GM13977 (cell line): ENCODE measurements at regions of chr20 and their contacts with region 1.

Region 1: GRCh38 chr20:32648761-32649650 is 24.7 kb downstream of the C20orf203 start:
- DNase-seq: no peak
- CTCF ChIP-seq: no peak

Region 2: GRCh38 chr20:32521780-32522525 is 127.1 kb before region 1 on chr20:
- in situ Hi-C with region 1: loop called (anchors 10 kb)
- DNase-seq: peak; percentile 77
- CTCF ChIP-seq: peak; percentile 83

Region 3: DNA sequence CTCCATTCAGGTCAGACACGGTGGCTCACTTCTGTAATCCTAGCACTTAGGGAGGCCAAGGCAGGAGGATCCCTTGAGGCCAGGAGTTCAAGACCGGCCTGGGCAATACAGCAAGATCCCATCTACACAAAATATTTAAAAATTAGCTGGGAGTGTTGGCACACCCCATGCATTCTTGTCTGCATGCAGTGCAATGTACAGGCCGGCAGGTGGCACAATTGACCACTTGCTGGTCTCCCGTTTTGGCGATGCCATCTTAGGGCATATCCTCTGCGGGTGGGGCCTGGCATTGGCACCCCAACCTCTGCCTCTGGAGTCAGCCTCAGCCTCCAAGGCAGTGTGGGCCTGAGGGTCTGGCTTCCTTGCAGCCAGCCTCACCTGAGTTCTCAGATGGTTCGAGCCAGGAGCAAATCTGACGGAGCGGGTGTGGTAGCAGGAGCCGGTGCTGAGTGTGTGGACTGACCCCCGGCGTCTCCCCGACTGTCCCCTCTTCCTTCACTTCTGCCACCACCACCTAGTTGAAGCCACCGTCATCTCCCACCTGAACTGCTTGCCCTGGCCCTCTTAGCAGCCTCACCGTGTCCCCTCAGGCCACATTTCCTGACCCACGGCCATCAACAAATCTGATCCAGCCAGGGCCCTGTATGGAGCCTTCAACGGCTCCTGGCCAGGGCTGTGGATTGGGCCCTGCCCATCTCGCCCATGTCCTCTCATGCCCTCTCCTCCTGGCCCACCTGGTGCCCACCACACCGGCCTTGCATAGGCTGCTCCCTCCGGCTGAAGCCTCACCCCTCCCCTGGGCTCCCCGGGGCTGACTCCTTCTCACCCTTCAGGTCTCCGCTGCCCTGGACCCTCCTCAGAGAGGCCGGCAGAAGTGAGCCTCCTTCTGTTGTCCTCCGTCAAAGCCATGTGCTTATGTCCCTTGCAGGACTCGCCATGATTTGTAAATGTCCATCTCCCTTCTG is 253.7 kb after region 1 on chr20:
- in situ Hi-C with region 1: no loop called
- DNase-seq: peak; percentile 78
- CTCF ChIP-seq: peak; percentile 91